PC-9 (cell line): ENCODE measurements at regions of chr1 and their contacts with region 1.

Region 1: DNA sequence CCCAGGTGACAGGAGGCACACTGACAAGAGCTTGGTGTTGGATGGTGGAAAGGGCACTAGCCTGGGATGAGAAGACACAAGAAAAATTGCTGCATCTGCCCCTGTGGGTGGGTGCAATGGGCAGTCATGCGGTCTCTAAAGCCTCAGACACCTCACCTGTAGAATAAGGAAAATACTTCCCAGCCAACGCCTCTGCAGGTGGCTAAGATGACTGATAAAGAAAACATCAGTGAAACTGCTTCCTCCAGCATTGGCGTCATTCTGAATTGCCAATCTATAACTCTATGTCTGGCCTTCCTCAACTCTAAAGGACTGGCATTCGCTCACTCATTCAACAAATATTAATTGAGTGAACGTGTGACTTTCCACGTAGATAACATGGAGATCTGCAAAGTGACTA is 100.4 kb upstream of the F3 start:
- DNase-seq: peak; percentile 78 to 100
- H3K4me3 ChIP-seq: peak overlapping the region; percentile 18; the same call in 1 of the 2 replicates
- H3K27ac ChIP-seq: peak overlapping the region; percentile 97
- H3K4me1 ChIP-seq: peaks cover 85% of the 10 kb centered on the region
- H3K27me3 ChIP-seq: no peaks in the 10 kb centered on the region
- CTCF ChIP-seq: no peak

Region 2: GRCh38 chr1:94783342-94784264 is 141.6 kb after region 1 on chr1:
- CTCF ChIA-PET with region 1: no interaction called
- POLR2A ChIA-PET with region 1: interaction called, 5 read pairs
- intact Hi-C with region 1: loop called (anchors 1 kb)
- DNase-seq: peak; percentile 87 to 94
- H3K4me3 ChIP-seq: peak overlapping the region; percentile 10; the same call in 1 of the 2 replicates
- H3K27ac ChIP-seq: peak overlapping the region; percentile 91
- H3K4me1 ChIP-seq: peaks cover 36% of the 10 kb centered on the region
- H3K27me3 ChIP-seq: no peaks in the 10 kb centered on the region
- CTCF ChIP-seq: no peak